ENCODE measurements at regions of chr16 and their contacts with region 1.

Region 1: DNA sequence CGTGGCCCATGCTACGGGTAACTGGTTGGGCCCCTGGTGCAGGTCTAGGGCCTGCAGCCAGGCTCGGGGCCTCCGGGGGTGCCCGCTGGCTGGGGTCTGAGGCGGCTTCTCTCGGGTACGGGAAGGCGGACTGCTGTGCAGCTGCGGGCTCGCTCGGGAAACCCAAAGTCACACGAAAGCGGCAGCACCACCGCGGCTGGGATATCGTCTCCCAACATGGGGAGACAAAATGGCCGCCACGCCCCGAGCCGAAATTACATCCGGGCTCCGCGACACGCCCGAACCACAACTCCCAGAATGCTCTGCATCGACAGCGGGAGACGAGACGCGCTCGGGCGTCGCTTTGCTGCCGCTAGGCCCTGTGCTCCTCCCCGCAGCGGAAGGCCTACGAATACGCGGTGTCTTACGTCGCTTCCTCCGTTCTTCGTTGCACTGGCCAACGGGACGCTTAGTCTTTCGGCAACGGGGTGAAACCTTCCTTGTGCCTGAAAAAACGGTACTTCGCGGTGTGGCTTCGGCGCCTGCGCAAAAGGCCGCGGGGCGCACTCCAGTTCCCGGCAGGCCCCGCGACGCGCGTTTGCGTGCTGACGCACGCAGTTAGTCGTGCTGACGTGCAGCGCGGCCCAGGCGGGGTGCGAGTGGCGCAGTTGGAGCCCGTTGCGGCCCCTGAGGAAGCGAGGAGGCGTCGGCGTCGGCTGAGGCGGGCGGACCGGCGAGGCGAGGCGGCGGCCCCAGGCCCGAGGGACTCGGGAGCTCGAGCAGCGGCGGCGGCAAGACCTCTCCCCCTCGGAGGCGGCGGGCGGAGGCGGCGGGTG is at the start of gene SRRM2:
- DNase-seq: peak; percentile 92
- H3K27ac ChIP-seq: peak within 1 kb of the TSS; percentile 99
- CTCF ChIP-seq: no peak

Region 2: DNA sequence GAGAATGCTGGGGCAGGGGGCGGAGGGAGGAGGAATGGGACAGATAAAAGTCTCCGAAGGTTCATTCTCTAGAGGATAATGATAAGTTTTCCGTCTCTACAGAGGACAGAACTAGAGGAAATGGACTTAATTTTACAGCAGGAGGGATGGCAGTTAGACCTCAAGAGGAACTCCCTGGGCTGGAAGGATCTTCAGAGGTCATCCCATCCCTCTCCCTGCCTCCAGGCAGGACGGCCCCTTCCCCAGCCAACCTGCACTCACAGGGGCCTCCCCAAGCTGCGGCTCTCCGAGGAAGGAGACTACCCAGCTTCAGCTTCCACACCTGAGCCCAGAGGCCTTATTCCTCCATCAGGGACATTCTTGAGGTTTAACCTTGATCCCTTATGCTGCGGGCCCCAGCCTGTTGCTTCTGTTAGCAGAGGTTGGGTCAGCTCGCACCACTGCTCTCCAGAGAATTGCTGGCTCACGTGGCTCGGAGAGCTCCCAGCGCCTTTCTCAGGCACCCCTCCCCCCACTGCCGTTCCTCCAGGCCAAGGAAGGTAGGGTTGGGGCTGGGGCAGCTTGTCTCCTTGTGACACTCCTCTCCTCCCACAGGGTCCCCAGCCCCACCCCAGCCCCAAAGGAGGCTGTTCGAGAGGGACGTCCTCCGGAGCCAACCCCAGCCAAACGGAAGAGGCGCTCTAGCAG is 16.3 kb after region 1 on chr16:
- CTCF ChIA-PET with region 1: no interaction called
- POLR2A ChIA-PET with region 1: interaction called, 12 read pairs
- DNase-seq: peak; percentile 59
- H3K27ac ChIP-seq: peak overlapping the region; percentile 93
- CTCF ChIP-seq: no peak